ENCODE measurements at regions of chr16 and their contacts with region 1.

Region 1: GRCh38 chr16:67653128-67653786 is 6.8 kb downstream of the ACD start:
- DNase-seq: no peak
- ATAC-seq: peak; percentile 28
- H3K4me3 Mint-ChIP-seq: peak overlapping the region; percentile 72
- H3K27ac Mint-ChIP-seq: no peak overlapping the region
- H3K4me1 Mint-ChIP-seq: peaks cover 12% of the 10 kb centered on the region
- H3K27me3 Mint-ChIP-seq: peaks cover 69% of the 10 kb centered on the region
- CTCF ChIP-seq: no peak

Region 2: GRCh38 chr16:67561824-67562525 is 91.3 kb before region 1 on chr16:
- CTCF ChIA-PET with region 1: interaction called, 12 read pairs
- POLR2A ChIA-PET with region 1: no interaction called
- DNase-seq: peak; percentile 94
- ATAC-seq: peak; percentile 88
- H3K4me3 Mint-ChIP-seq: peak overlapping the region; percentile 83
- H3K27ac Mint-ChIP-seq: peak overlapping the region; percentile 93
- H3K4me1 Mint-ChIP-seq: peaks cover 15% of the 10 kb centered on the region
- H3K27me3 Mint-ChIP-seq: no peaks in the 10 kb centered on the region
- CTCF ChIP-seq: no peak

Region 3: GRCh38 chr16:67667817-67668494 is 14.7 kb after region 1 on chr16:
- CTCF ChIA-PET with region 1: interaction called, 38 read pairs
- POLR2A ChIA-PET with region 1: interaction called, 3 read pairs
- DNase-seq: peak; percentile 82
- ATAC-seq: peak; percentile 66
- H3K4me3 Mint-ChIP-seq: peak overlapping the region; percentile 84; the same call in 1 of the 2 replicates
- H3K27ac Mint-ChIP-seq: no peak overlapping the region
- H3K4me1 Mint-ChIP-seq: peaks cover 11% of the 10 kb centered on the region
- H3K27me3 Mint-ChIP-seq: peaks cover 6% of the 10 kb centered on the region
- CTCF ChIP-seq: no peak

Region 4: GRCh38 chr16:67750466-67750865 is 97.2 kb after region 1 on chr16:
- CTCF ChIA-PET with region 1: no interaction called
- POLR2A ChIA-PET with region 1: no interaction called
- DNase-seq: no peak
- ATAC-seq: no peak
- H3K4me3 Mint-ChIP-seq: no peak overlapping the region
- H3K27ac Mint-ChIP-seq: peak overlapping the region; percentile 19
- H3K4me1 Mint-ChIP-seq: peaks cover 8% of the 10 kb centered on the region; the same call in 1 of the 2 replicates
- H3K27me3 Mint-ChIP-seq: no peaks in the 10 kb centered on the region
- CTCF ChIP-seq: no peak